ENCODE measurements at regions of chr17 and their contacts with region 1.

Region 1: DNA sequence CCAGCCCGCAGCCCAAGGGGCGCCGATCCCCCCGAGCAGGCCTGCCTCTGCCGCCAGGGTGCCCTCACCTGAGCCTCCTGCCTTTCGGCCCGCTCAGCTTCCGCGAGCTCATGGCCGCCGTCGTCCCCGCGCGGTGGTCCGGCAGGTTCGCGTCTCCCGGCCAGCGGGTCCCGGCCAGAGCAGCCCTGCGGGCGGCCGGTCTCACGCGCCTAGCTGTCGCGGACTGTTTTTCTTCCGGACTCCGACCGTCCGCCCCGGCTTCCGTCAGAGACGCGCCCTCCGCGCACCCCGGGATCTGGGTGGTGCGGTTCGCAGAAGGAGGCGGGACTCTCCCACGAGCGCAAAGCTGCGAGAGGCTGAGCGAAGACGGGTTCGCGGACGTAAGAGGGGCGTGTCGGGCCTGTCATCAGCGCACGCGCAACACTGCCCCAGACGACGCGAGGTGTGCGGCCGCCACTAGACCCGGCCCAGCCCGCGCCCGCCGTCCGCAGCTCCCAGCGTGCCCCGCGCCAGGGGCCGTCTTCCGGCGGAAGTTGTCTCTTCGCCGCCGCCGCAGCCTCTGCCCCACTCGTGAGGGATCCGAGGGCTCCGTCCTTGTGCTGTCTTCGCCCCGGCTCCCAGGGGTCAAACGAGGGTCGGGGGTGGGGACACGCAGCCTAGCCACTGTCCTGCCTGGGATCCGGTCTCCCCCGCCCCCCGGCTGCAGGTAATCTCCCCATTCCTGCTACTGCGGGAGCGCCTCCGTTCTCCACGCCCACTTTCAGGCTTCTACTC is at the start of gene INPP5K:
- DNase-seq: peak; percentile 99
- H3K4me3 ChIP-seq: peak within 1 kb of the TSS; percentile 84 to 94 (median 90)
- H3K27ac ChIP-seq: peak within 1 kb of the TSS; percentile 94 to 98 (median 96)
- H3K4me1 ChIP-seq: peaks cover 46 to 56% (median 54%) of the 10 kb centered on the region in 4 donors
- H3K27me3 ChIP-seq: no peaks in the 10 kb centered on the region
- CTCF ChIP-seq: peak in 1 of 3 experiments; percentile 4
- EP300 ChIP-seq: no peak
- POLR2A ChIP-seq: peak; percentile 56
- total RNA-seq, gene INPP5K: 62.0 to 89.3 (median 76.1) TPM

Region 2: DNA sequence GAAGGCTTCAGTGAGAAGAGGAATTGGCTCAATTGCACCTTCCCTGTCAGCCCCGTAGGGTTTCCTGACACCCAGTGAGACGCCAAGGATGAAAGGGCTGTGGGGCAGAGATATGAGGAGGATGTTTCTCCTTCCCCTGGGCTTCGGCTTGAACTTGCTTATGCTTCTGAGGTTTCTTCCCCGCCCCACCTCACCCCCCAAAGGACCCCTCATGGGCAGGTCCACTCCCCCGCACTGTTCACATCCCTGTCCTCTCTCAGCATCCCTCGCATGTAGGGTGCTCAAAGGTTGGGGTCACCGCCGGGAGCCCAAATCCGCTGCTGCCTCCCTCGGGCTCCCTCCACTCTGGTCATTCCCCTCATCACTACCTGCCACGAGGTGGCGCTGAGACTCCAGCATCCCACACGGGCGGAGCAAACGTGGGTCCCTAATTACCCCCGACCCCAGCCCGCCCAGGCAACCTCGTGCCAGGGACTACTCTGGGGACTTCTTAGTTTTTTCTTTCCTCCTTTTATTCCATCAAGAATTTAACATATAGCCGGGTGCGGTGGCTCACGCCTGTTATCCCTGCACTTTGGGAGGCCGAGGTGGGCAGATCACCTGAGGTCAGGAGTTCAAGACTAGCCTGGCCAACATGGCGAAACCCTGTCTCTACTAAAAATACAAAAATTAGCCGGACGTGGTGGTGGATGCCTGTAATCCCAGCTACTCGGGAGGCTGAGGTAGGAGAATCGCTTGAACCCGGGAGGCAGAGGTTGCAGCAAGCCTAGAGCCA is 240.4 kb before region 1 on chr17:
- intact Hi-C with region 1: loop called (anchors 5 kb)
- DNase-seq: peak; percentile 93
- H3K4me3 ChIP-seq: no peak overlapping the region
- H3K27ac ChIP-seq: no peak overlapping the region
- H3K4me1 ChIP-seq: peaks cover 0 to 14% (median 9%) of the 10 kb centered on the region in 4 donors
- H3K27me3 ChIP-seq: peaks cover 0 to 56% (median 7%) of the 10 kb centered on the region in 4 donors
- CTCF ChIP-seq: peak; percentile 69 to 88 (median 82)
- EP300 ChIP-seq: no peak
- POLR2A ChIP-seq: no peak

Region 3: DNA sequence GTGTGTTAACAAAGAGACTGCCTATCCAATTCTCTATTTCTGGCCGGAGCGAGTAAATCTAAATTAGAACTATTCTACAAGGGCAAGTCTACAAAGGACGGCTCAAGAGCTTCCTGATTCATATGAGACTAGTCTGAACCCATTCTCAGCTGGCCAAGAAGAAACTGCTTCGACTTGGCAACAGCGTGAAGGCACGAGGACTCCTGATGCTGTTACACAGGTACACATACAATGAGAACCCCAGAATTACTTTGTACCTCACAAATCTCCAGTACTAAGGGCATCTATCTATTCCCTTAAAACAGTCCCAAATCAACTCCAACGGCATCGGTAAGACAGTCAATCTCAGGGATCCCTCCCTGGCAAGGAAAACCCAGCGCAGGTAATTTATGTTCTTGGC is 62.0 kb before region 1 on chr17:
- intact Hi-C with region 1: loop called (anchors 5 kb)
- DNase-seq: no peak
- H3K4me3 ChIP-seq: peak overlapping the region; percentile 71 to 88 (median 84)
- H3K27ac ChIP-seq: peak overlapping the region; percentile 90 to 99 (median 90)
- H3K4me1 ChIP-seq: peaks cover 39 to 59% (median 56%) of the 10 kb centered on the region in 4 donors
- H3K27me3 ChIP-seq: no peaks in the 10 kb centered on the region
- CTCF ChIP-seq: no peak
- EP300 ChIP-seq: no peak
- POLR2A ChIP-seq: no peak

Measured in esophagus muscularis mucosa (tissue), 4 donors.